Activated CD4-positive, alpha-beta T cell treated with anti-CD3 and anti-CD28 coated beads, Interleukin-2, amount 10 ng/mL, durations not matched to agents 24 days and 14 days (primary cell): ENCODE measurements at regions of chr2 and their contacts with region 1.

Region 1: DNA sequence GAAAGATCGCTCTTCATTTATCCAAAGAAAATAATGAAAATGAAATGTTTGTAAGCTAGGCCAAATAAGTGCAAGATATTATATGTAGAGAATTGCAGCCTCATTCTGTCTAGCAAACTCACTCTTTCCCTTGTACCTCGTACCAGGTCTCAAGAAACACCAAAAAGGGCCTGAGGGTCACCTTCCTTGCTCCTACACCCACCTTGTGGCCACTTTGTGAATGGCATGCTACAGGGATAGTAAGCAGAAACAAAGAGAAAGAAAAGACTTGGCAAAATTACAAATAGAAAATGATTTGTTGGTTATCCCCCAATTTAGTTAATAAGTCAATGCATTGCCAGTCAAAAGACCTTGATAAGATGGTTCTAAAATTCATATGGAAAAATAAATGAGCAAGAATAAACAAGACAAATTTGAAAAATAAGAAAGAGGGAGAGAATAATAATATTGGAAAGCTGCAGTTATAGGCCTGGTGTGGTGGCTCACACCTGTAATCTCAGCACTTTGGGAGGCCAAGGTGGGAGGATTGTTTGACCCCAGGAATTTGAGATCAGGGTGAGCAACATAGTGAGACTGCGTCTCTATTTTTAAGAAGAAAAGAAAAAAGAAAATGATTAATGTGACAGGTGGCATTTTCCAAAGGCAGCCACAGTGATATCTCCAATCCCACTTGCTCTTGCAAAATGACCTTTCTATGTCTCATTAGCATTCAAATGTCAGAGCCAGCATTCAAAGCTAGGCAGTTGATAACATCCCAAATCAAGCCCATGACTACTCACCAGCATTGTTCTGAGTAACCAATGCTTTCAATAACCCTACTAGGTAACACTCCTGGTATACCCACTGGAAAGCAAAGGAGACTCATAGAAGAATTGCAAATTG is 38.8 kb upstream of the BMP10 start:
- DNase-seq: peak; percentile 91
- H3K4me3 Mint-ChIP-seq: peak overlapping the region; percentile 13
- H3K27ac Mint-ChIP-seq: peak overlapping the region; percentile 67
- H3K4me1 Mint-ChIP-seq: peaks cover 35% of the 10 kb centered on the region
- H3K27me3 Mint-ChIP-seq: no peaks in the 10 kb centered on the region

Region 2: DNA sequence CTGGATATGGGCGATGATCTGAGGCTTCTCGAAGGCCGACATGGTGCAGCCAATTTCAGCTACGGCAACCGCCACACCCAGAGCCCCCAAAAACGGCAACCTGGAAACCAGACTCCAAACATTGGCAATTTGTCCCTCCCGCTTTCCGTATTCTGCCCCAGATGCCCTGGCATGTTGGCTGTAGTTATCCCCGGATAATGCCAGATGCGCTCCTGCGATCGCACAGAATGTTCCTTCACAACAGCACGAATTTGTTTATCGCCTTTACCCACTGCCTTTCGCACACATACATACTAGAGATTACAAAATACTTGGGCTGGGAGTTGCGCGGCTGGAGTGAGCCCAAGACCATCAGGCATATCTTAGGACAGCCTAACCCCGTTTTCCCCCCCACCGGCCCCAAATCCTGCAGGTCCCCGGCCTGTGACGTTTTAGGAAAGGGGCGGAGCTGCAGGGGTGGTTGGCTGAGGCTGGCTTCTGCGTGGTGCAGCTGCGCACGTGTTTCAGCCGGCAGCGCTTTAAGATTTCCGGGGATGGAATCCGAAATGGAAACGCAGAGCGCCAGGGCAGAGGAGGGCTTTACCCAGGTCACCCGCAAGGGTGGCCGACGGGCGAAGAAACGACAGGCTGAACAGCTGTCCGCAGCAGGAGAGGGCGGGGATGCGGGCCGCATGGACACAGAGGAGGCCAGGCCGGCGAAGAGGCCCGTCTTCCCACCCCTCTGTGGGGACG is 752.5 kb before region 1 on chr2 and contains the start of gene PNO1:
- intact Hi-C with region 1: loop called (anchors 2 kb)
- DNase-seq: peak; percentile 99
- H3K4me3 Mint-ChIP-seq: peak within 1 kb of the TSS; percentile 98
- H3K27ac Mint-ChIP-seq: peak within 1 kb of the TSS; percentile 99
- H3K4me1 Mint-ChIP-seq: peaks cover 26% of the 10 kb centered on the region
- H3K27me3 Mint-ChIP-seq: no peaks in the 10 kb centered on the region
- total RNA-seq, gene PNO1: 35.4 and 38.4 TPM in 2 replicates

Region 3: GRCh38 chr2:68653538-68653982 is 256.5 kb before region 1 on chr2:
- intact Hi-C with region 1: loop called (anchors 1 kb)
- DNase-seq: peak; percentile 88
- H3K4me3 Mint-ChIP-seq: peak overlapping the region; percentile 66
- H3K27ac Mint-ChIP-seq: peak overlapping the region; percentile 71
- H3K4me1 Mint-ChIP-seq: peaks cover 46% of the 10 kb centered on the region
- H3K27me3 Mint-ChIP-seq: peaks cover 36% of the 10 kb centered on the region

Region 4: GRCh38 chr2:68709421-68709911 is 200.6 kb before region 1 on chr2:
- intact Hi-C with region 1: loop called (anchors 1 kb)
- DNase-seq: peak; percentile 74
- H3K4me3 Mint-ChIP-seq: peak overlapping the region; percentile 11
- H3K27ac Mint-ChIP-seq: peak overlapping the region; percentile 64
- H3K4me1 Mint-ChIP-seq: peaks cover 29% of the 10 kb centered on the region
- H3K27me3 Mint-ChIP-seq: peaks cover 4% of the 10 kb centered on the region

Region 5: DNA sequence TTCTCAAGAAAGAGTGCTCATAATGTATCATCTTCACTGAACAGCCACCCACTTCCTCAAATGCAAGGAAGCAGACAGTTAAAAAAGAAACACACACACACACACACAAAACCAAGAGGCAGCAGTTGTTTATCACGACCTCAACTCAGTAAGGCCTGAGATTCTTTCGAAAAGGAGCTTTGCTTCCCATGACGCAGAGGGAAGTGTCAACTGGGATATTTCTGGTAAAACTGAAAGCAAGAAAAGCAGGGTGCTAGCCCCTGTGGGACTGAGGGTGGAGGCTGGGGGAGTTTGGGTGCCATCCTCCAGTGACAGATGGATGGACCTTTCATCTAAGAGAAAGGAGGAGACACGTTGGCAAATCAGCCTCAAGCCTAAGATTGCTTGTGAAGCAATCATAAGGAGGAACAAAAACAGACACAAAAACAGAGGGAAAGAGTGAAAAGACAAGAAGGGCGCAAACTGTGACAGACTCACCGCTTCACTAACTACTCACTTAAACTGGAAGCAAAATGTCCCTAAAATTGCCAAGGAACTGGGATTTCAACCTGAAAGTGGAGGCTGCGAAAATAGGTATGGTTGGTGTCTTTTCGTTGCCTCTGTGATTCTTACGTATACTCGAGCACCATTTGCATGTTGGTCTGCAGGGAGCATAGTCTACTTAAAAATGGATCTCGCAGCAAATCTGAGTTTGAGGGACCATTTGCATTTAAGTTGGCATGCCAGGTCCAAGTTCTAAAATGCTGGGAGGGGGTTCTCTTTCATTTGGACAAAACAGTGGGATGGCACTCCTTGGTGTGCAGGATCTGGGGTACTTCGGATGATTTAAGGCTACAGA is 175.1 kb before region 1 on chr2 and contains the start of gene ARHGAP25:
- intact Hi-C with region 1: loop called (anchors 1 kb)
- DNase-seq: peak; percentile 89
- H3K4me3 Mint-ChIP-seq: no peak within 1 kb of the TSS
- H3K27ac Mint-ChIP-seq: no peak within 1 kb of the TSS
- H3K4me1 Mint-ChIP-seq: peaks cover 41% of the 10 kb centered on the region
- H3K27me3 Mint-ChIP-seq: no peaks in the 10 kb centered on the region
- total RNA-seq, gene ARHGAP25: 37.8 and 42.2 TPM in 2 replicates

Region 6: DNA sequence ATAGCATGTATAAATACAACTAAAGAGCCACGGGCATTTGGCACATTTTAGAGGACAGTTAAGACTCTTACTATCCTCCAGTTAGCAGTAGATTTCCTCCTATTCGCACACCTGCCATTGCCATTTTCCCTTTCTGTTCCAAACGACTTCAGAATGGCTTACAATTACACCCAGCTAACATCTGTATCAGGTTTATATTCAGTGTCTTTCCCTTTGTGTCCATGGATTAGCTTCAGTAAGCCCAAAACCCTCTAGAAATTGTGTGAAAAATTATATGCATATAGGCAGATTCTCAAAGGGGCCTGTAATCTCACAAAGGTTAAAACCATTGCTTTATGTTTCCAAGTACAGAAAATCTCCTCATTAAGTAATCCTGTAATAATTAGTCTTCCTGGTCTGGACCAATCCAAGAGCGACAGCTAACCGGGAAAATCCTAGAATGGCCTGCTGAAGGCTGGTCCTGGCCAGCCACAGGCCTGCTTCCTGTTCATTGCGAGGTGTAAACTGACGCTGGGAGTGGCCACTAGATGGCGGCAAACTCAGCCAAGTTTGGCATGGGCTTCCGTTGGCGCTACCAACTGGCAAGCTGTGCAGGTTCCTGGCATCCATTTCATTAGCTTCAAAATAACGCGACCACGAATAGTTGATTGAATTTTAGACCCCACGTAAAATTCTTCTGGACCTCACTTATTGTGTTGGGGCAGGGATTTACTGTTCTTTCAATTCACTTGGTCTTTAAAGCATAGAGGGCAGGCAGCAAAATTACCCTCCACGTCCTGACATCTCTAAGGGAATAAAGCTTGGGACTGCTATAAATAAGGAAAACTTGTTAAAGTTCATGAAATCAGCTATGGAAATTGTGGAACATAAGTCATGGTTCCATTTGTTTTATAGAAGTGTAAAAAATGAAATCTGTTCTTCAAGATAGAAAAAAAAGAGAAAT is 158.4 kb before region 1 on chr2:
- intact Hi-C with region 1: loop called (anchors 1 kb)
- DNase-seq: peak; percentile 96
- H3K4me3 Mint-ChIP-seq: peak overlapping the region; percentile 23
- H3K27ac Mint-ChIP-seq: peak overlapping the region; percentile 83
- H3K4me1 Mint-ChIP-seq: peaks cover 73% of the 10 kb centered on the region
- H3K27me3 Mint-ChIP-seq: no peaks in the 10 kb centered on the region

Region 7: GRCh38 chr2:68849579-68850030 is 60.4 kb before region 1 on chr2:
- intact Hi-C with region 1: no loop called
- DNase-seq: no peak
- H3K4me3 Mint-ChIP-seq: no peak overlapping the region
- H3K27ac Mint-ChIP-seq: no peak overlapping the region
- H3K4me1 Mint-ChIP-seq: no peaks in the 10 kb centered on the region
- H3K27me3 Mint-ChIP-seq: peaks cover 41% of the 10 kb centered on the region

Region 8: GRCh38 chr2:68951899-68952298 is 41.9 kb after region 1 on chr2:
- intact Hi-C with region 1: no loop called
- DNase-seq: no peak
- H3K4me3 Mint-ChIP-seq: no peak overlapping the region
- H3K27ac Mint-ChIP-seq: no peak overlapping the region
- H3K4me1 Mint-ChIP-seq: no peaks in the 10 kb centered on the region
- H3K27me3 Mint-ChIP-seq: peaks cover 26% of the 10 kb centered on the region

Region 9: GRCh38 chr2:69138793-69139510 is 228.9 kb after region 1 on chr2:
- intact Hi-C with region 1: no loop called
- DNase-seq: no peak
- H3K4me3 Mint-ChIP-seq: no peak overlapping the region
- H3K27ac Mint-ChIP-seq: no peak overlapping the region
- H3K4me1 Mint-ChIP-seq: no peaks in the 10 kb centered on the region
- H3K27me3 Mint-ChIP-seq: peaks cover 30% of the 10 kb centered on the region